CD8-positive, alpha-beta memory T cell (primary cell): ENCODE measurements at regions of chr3 and their contacts with region 1.

Region 1: DNA sequence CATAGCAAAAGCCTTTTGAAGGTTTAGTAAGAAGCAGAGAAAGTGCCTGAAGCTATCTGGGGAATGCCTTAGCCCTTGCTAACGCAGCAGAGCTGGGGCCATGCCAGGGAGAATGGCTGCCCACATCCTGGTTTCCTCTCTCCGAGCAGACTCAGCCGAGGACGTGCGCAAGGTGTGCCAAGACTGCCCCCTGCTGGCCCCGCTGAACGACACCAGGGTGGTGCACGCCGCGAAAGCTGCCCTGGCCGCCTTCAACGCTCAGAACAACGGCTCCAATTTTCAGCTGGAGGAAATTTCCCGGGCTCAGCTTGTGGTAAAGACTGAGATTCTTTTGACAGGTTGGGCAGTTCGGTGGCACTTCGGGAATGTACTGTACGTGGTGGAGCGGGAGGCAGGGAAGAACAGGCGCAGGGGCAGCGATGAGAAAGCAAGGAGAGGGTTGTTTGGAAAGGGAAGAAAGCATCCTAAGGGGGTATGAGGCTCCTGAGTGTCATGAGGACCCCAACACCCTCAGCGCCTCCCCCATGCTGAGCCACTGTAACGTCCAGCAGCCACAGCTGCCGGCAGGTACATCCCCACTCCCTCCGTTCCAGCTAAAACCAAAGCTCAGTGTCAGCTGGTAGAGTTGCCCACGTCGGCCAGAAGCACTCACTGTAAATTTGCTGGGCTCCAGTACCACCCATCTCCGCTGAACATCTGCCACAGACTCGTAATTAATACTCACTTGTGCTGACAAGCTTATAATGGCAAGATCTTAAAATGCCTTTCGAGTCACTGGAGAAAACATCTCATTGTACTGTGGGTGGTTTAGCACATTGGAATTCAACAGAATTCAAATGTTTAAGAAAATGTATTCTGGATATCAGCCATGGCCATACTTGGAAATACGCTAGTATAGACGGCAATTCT is 4.4 kb downstream of the AHSG start:
- DNase-seq: peak; percentile 76 to 89 (median 79)
- H3K4me3 ChIP-seq: no peak overlapping the region
- H3K4me3 Mint-ChIP-seq: peak overlapping the region; percentile 16 to 84 (median 68)
- H3K27ac ChIP-seq: no peak overlapping the region
- H3K27ac Mint-ChIP-seq: peak overlapping the region in 3 of 8 donors; percentile 51 to 71 (median 63)
- H3K4me1 ChIP-seq: peaks cover 13% of the 10 kb centered on the region
- H3K4me1 Mint-ChIP-seq: peaks cover 19 to 25% (median 21%) of the 10 kb centered on the region in 3 donors
- H3K27me3 ChIP-seq: peaks cover 15% of the 10 kb centered on the region
- H3K27me3 Mint-ChIP-seq: peaks cover 20 to 42% of the 10 kb centered on the region in 2 donors

Region 2: GRCh38 chr3:185983495-185984141 is 633.7 kb before region 1 on chr3:
- CTCF ChIA-PET with region 1: interaction called, 26 read pairs
- POLR2A ChIA-PET with region 1: no interaction called
- DNase-seq: peak; percentile 32 to 67 (median 46)
- H3K4me3 ChIP-seq: no peak overlapping the region
- H3K4me3 Mint-ChIP-seq: no peak overlapping the region
- H3K27ac ChIP-seq: no peak overlapping the region
- H3K27ac Mint-ChIP-seq: no peak overlapping the region
- H3K4me1 ChIP-seq: peaks cover 7% of the 10 kb centered on the region
- H3K4me1 Mint-ChIP-seq: peaks cover 0 to 5% (median 4%) of the 10 kb centered on the region in 3 donors
- H3K27me3 ChIP-seq: no peaks in the 10 kb centered on the region
- H3K27me3 Mint-ChIP-seq: peaks cover 4 to 5% of the 10 kb centered on the region in 2 donors

Region 3: GRCh38 chr3:186121968-186122367 is 495.3 kb before region 1 on chr3:
- CTCF ChIA-PET with region 1: no interaction called
- POLR2A ChIA-PET with region 1: no interaction called
- DNase-seq: no peak
- H3K4me3 ChIP-seq: no peak overlapping the region
- H3K4me3 Mint-ChIP-seq: no peak overlapping the region
- H3K27ac ChIP-seq: no peak overlapping the region
- H3K27ac Mint-ChIP-seq: no peak overlapping the region
- H3K4me1 ChIP-seq: no peaks in the 10 kb centered on the region
- H3K4me1 Mint-ChIP-seq: no peaks in the 10 kb centered on the region
- H3K27me3 ChIP-seq: peaks cover 12% of the 10 kb centered on the region
- H3K27me3 Mint-ChIP-seq: peaks cover 35 to 54% of the 10 kb centered on the region in 2 donors

Region 4: GRCh38 chr3:186540221-186540834 is 77.0 kb before region 1 on chr3:
- CTCF ChIA-PET with region 1: interaction called, 21 read pairs
- POLR2A ChIA-PET with region 1: no interaction called
- DNase-seq: peak; percentile 64 to 82 (median 74)
- H3K4me3 ChIP-seq: no peak overlapping the region
- H3K4me3 Mint-ChIP-seq: peak overlapping the region in 1 of 7 donors; percentile 5
- H3K27ac ChIP-seq: no peak overlapping the region
- H3K27ac Mint-ChIP-seq: peak overlapping the region in 4 of 8 donors; percentile 0 to 78 (median 42)
- H3K4me1 ChIP-seq: no peaks in the 10 kb centered on the region
- H3K4me1 Mint-ChIP-seq: peaks cover 8 to 19% (median 8%) of the 10 kb centered on the region in 3 donors
- H3K27me3 ChIP-seq: no peaks in the 10 kb centered on the region
- H3K27me3 Mint-ChIP-seq: no peaks in the 10 kb centered on the region

Region 5: GRCh38 chr3:186583831-186584230 is 33.5 kb before region 1 on chr3:
- CTCF ChIA-PET with region 1: interaction called, 11 read pairs
- POLR2A ChIA-PET with region 1: no interaction called
- DNase-seq: no peak
- H3K4me3 ChIP-seq: no peak overlapping the region
- H3K4me3 Mint-ChIP-seq: no peak overlapping the region
- H3K27ac ChIP-seq: no peak overlapping the region
- H3K27ac Mint-ChIP-seq: no peak overlapping the region
- H3K4me1 ChIP-seq: no peaks in the 10 kb centered on the region
- H3K4me1 Mint-ChIP-seq: peaks cover 0 to 10% (median 2%) of the 10 kb centered on the region in 3 donors
- H3K27me3 ChIP-seq: no peaks in the 10 kb centered on the region
- H3K27me3 Mint-ChIP-seq: no peaks in the 10 kb centered on the region

Region 6: GRCh38 chr3:186598108-186598784 is 19.0 kb before region 1 on chr3:
- CTCF ChIA-PET with region 1: interaction called, 15 read pairs
- POLR2A ChIA-PET with region 1: no interaction called
- DNase-seq: no peak
- H3K4me3 ChIP-seq: no peak overlapping the region
- H3K4me3 Mint-ChIP-seq: peak overlapping the region in 1 of 7 donors; percentile 57
- H3K27ac ChIP-seq: no peak overlapping the region
- H3K27ac Mint-ChIP-seq: no peak overlapping the region
- H3K4me1 ChIP-seq: no peaks in the 10 kb centered on the region
- H3K4me1 Mint-ChIP-seq: no peaks in the 10 kb centered on the region
- H3K27me3 ChIP-seq: no peaks in the 10 kb centered on the region
- H3K27me3 Mint-ChIP-seq: peaks cover 4% of the 10 kb centered on the region in 2 donors

Region 7: GRCh38 chr3:186705882-186706780 is 88.8 kb after region 1 on chr3:
- CTCF ChIA-PET with region 1: no interaction called
- POLR2A ChIA-PET with region 1: no interaction called
- DNase-seq: peak in 4 of 5 donors; percentile 4 to 49 (median 16)
- H3K4me3 ChIP-seq: no peak overlapping the region
- H3K4me3 Mint-ChIP-seq: peak overlapping the region in 1 of 7 donors; percentile 49
- H3K27ac ChIP-seq: no peak overlapping the region
- H3K27ac Mint-ChIP-seq: peak overlapping the region in 1 of 8 donors; percentile 34
- H3K4me1 ChIP-seq: no peaks in the 10 kb centered on the region
- H3K4me1 Mint-ChIP-seq: peaks cover 10 to 12% (median 11%) of the 10 kb centered on the region in 3 donors
- H3K27me3 ChIP-seq: peaks cover 4% of the 10 kb centered on the region
- H3K27me3 Mint-ChIP-seq: peaks cover 29 to 48% of the 10 kb centered on the region in 2 donors

Region 8: GRCh38 chr3:186783073-186783730 is 165.9 kb after region 1 on chr3 and contains the start of gene EIF4A2:
- CTCF ChIA-PET with region 1: interaction called, 13 read pairs
- POLR2A ChIA-PET with region 1: interaction called, 10 read pairs
- DNase-seq: peak; percentile 85 to 94 (median 92)
- H3K4me3 ChIP-seq: peak within 1 kb of the TSS; percentile 99
- H3K4me3 Mint-ChIP-seq: peak within 1 kb of the TSS; percentile 96 to 99 (median 99)
- H3K27ac ChIP-seq: peak within 1 kb of the TSS; percentile 98
- H3K27ac Mint-ChIP-seq: peak within 1 kb of the TSS; percentile 97 to 100 (median 99)
- H3K4me1 ChIP-seq: peaks cover 44% of the 10 kb centered on the region
- H3K4me1 Mint-ChIP-seq: peaks cover 51 to 58% (median 54%) of the 10 kb centered on the region in 3 donors
- H3K27me3 ChIP-seq: no peaks in the 10 kb centered on the region
- H3K27me3 Mint-ChIP-seq: peaks cover 0 to 13% of the 10 kb centered on the region in 2 donors
- total RNA-seq, gene EIF4A2: 563 to 564 TPM